ENCODE measurements at regions of chr3 and their contacts with region 1.

Region 1: GRCh38 chr3:141460097-141460704 is 26.6 kb upstream of the RASA2 start:
- DNase-seq: peak; percentile 85 to 91 (median 89)
- ATAC-seq: peak; percentile 89 to 98 (median 97)
- H3K4me3 ChIP-seq: no peak overlapping the region
- H3K27ac ChIP-seq: no peak overlapping the region
- H3K4me1 ChIP-seq: peaks cover 0 to 12% (median under 1%) of the 10 kb centered on the region in 12 donors
- H3K27me3 ChIP-seq: no peaks in the 10 kb centered on the region
- CTCF ChIP-seq: peak; percentile 77 to 92 (median 87)
- POLR2A ChIP-seq: no peak

Region 2: DNA sequence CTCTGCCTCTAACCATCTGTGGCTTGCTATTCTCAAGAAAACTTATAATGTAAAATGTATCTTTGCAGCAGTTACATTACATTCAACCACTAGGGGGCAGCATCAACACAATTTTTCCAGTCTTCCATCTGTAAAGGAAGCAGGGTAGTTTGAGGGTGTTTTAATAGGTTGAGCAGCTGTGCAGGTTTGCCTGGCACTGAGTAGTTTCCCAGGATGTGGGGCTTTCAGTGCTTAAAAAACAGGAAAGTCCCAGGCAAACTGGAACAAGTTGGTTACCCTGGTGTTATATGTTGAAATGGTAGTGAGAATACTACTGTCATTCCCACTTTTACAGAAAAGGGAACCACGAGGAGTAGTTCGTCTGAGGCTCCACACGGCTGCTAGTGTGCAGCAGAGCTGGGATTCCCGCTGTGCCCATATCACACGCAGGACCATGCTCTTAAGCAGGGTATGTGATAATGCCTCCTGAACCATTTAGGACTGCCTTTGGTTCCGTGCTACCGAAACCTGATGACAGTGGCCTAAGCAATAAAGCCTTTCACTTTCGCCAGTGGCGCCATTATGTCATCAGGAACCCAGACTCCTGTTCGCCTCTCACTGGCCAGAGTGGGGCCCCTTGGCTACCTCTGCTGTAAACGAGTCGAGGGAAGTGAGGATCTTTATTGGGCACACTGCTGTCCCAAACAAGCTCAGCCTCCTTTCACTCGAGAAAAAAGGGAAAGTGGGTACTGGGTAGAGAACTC is 156.5 kb before region 1 on chr3:
- intact Hi-C with region 1: loop called in 2 of 10 experiments (anchors 2 kb)
- DNase-seq: peak in 2 of 5 donors; percentile 48 to 58
- ATAC-seq: peak; percentile 59 to 76 (median 68)
- H3K4me3 ChIP-seq: no peak overlapping the region
- H3K27ac ChIP-seq: peak overlapping the region in 2 of 12 donors; percentile 4 to 13
- H3K4me1 ChIP-seq: peaks cover 0 to 25% (median 3%) of the 10 kb centered on the region in 12 donors
- H3K27me3 ChIP-seq: no peaks in the 10 kb centered on the region
- CTCF ChIP-seq: peak; percentile 71 to 97 (median 82)
- POLR2A ChIP-seq: no peak

Region 3: GRCh38 chr3:141644931-141645330 is 184.7 kb after region 1 on chr3:
- intact Hi-C with region 1: loop called in 1 of 10 experiments (anchors 2 kb)
- DNase-seq: peak; percentile 71 to 91 (median 73)
- ATAC-seq: peak; percentile 61 to 86 (median 83)
- H3K4me3 ChIP-seq: no peak overlapping the region
- H3K27ac ChIP-seq: no peak overlapping the region
- H3K4me1 ChIP-seq: peaks cover 0 to 6% (median 0%) of the 10 kb centered on the region in 12 donors
- H3K27me3 ChIP-seq: no peaks in the 10 kb centered on the region
- CTCF ChIP-seq: peak; percentile 41 to 73 (median 63)
- POLR2A ChIP-seq: no peak

Measured in heart left ventricle (tissue), 16 donors.